Activated CD8-positive, alpha-beta T cell treated with anti-CD3 and anti-CD28 coated beads, Interleukin-2, amount 10 ng/mL, durations not matched to agents 7 days and 5 days (primary cell): ENCODE measurements at regions of chr12 and their contacts with region 1.

Region 1: GRCh38 chr12:124906606-124907261 is 7.7 kb downstream of the UBC start:
- DNase-seq: peak; percentile 96
- ATAC-seq: peak; percentile 59
- H3K4me3 Mint-ChIP-seq: no peak overlapping the region
- H3K27ac Mint-ChIP-seq: peak overlapping the region; percentile 1
- H3K4me1 Mint-ChIP-seq: peaks cover 33% of the 10 kb centered on the region
- H3K27me3 Mint-ChIP-seq: no peaks in the 10 kb centered on the region

Region 2: GRCh38 chr12:124771462-124772288 is 135.1 kb before region 1 on chr12:
- CTCF ChIA-PET with region 1: interaction called, 15 read pairs
- POLR2A ChIA-PET with region 1: interaction called, 3 read pairs
- DNase-seq: peak; percentile 87
- ATAC-seq: peak; percentile 47
- H3K4me3 Mint-ChIP-seq: peak overlapping the region; percentile 2
- H3K27ac Mint-ChIP-seq: peak overlapping the region; percentile 11
- H3K4me1 Mint-ChIP-seq: peaks cover 41% of the 10 kb centered on the region
- H3K27me3 Mint-ChIP-seq: peaks cover 18% of the 10 kb centered on the region

Region 3: DNA sequence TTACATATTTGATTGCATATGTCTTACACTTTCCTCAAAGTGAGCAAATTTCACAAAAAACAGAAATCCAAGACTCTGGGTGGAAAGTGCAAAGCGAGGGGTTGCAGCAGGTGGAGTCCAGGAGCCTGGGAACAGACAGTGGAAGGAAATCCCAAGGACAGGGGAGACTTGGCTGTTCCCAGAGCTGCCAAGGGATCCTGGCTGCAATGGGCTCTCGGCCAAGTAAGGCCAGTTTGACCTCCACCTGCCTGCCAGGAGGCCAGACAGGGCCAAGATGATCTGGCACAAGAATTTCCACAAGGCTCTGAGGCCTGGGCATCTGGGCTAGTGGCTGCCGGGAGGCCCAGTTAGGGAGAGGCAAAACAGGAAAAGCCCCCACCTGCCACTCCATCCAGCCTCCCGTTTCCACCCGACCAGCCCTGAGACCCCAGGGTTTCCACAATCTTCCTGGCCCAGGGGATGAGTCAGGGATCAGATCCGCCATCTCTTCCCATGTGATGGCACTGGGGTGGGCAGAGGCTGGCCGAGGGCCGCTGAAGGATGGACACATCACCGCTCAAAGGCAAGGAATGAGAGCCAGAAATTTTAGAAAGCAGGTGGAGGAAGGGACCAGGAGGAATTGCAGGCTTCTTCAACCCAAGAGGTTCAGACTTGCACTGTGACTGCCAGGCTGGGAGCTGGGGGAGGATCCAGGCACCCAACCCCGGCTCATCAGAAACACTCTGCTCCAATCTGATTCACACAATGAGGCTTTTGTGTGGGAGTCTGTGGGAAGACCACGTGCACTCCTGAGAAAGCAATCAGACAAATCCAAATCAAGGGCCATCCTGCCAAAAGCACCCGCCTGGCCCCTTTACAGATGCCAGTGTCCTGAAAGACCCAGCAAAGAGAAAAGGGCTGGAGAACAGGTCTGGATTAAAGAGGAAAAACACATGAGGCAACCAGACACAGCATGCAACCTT is 59.3 kb before region 1 on chr12:
- CTCF ChIA-PET with region 1: no interaction called
- POLR2A ChIA-PET with region 1: no interaction called
- DNase-seq: no peak
- ATAC-seq: no peak
- H3K4me3 Mint-ChIP-seq: no peak overlapping the region
- H3K27ac Mint-ChIP-seq: no peak overlapping the region
- H3K4me1 Mint-ChIP-seq: peaks cover 7% of the 10 kb centered on the region
- H3K27me3 Mint-ChIP-seq: no peaks in the 10 kb centered on the region

Region 4: DNA sequence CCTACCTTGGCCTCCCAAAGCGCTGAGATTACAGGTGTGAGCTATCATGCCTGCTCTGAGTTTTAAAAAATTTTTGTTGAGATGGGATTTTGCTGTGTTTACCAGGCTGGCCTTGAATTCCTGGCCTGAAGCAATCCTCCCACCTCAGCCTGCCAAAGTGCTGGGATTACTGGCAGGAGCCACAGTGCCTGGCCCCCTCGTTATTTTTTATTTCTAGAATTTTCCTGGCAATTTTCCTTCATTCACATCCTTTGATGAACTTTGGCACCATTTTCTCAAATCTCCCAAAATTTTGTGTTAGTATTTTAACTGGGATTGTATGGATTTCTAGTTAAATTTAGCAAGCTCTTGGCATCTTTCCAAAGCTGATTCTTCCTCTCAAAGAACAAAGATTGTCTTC is 18.5 kb before region 1 on chr12:
- CTCF ChIA-PET with region 1: interaction called, 10 read pairs
- POLR2A ChIA-PET with region 1: interaction called, 4 read pairs
- DNase-seq: no peak
- ATAC-seq: no peak
- H3K4me3 Mint-ChIP-seq: no peak overlapping the region
- H3K27ac Mint-ChIP-seq: no peak overlapping the region
- H3K4me1 Mint-ChIP-seq: no peaks in the 10 kb centered on the region
- H3K27me3 Mint-ChIP-seq: no peaks in the 10 kb centered on the region

Region 5: DNA sequence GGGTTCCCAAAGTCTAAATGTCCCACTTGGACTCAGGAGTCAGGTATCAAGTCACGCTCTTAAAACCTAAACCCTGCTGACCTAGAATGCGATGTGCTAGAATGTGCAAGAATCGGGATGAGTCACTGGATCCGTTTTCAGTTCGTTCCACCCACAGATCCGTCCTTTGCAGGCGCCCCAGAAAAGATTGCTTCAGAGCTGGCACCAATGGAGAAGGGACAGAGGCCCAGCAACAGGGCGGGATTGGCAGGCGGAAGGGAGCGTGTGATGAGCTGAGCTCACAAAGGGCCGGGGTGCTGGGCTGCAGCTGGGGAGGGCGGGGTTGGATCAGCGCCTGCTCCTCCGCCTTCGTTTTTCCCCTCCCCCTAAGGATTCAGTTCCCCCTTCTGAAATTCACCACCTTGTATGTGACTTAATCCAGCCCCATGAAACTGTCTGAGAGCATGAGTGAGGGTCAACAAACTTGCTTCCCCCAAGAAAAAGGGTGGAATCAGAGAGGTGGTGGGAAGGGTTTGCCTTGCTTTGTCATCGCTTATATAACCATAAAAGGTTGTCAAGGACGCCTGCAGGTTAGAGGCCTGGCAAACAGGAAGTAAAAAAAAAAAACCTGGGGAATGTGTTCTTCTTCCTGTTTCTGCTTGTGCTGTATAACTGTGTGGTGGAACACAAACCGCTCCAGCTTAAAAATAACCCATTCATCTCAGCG is 10.6 kb after region 1 on chr12:
- CTCF ChIA-PET with region 1: interaction called, 93 read pairs
- POLR2A ChIA-PET with region 1: interaction called, 11 read pairs
- DNase-seq: peak; percentile 97
- ATAC-seq: peak; percentile 74
- H3K4me3 Mint-ChIP-seq: peak overlapping the region; percentile 99
- H3K27ac Mint-ChIP-seq: peak overlapping the region; percentile 98
- H3K4me1 Mint-ChIP-seq: peaks cover 83% of the 10 kb centered on the region
- H3K27me3 Mint-ChIP-seq: no peaks in the 10 kb centered on the region

Region 6: DNA sequence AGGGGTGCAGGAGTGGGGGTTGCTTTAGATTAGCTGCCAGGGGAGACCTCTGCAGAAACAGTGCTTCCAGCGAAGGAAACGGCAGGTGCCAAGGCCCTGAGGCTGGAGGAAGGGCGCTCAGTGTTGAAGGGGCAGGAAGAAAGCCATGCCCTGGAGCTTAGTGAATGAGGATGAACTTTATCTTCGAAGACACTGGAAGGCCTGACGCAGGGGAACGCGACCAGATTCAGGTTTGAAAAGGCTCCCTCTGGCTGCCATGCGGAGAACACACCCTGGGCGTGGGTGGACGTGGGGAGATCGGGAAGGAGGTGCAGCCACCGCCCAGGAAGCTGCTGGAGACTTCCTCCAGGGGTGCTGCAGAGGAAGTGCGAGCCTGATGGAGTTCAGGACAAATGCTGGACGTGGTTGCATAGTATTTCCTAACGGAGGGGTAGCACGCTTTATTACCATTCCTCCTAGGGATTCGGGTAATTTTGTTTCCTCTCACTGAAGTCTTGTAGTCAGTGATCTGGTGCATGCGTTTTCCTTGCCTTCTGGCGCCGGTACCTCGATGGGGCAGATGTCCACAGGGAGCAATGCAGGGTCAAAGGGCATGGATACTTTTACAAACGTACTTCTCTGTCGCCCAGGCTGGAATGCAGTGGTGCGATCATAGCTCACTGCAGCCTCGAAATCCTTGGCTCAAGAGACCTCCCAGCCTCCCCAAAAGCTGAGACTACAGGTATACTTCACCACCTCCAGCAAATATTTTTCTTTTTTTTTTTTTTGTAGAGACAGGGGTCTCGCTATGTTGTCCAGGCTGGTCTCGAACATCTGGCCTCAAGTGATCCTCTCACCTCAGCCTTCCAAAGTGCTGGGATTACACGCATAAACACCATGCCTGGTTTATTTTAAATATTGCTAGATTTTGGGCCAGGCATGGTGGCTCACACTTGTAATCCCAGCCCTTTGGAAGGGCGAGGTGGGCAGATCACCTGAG is 34.1 kb after region 1 on chr12:
- CTCF ChIA-PET with region 1: interaction called, 199 read pairs
- POLR2A ChIA-PET with region 1: interaction called, 12 read pairs
- DNase-seq: peak; percentile 90
- ATAC-seq: peak; percentile 53
- H3K4me3 Mint-ChIP-seq: no peak overlapping the region
- H3K27ac Mint-ChIP-seq: no peak overlapping the region
- H3K4me1 Mint-ChIP-seq: peaks cover 24% of the 10 kb centered on the region
- H3K27me3 Mint-ChIP-seq: no peaks in the 10 kb centered on the region